Natural killer cell (primary cell): ENCODE measurements at regions of chr14 and their contacts with region 1.

Region 1: DNA sequence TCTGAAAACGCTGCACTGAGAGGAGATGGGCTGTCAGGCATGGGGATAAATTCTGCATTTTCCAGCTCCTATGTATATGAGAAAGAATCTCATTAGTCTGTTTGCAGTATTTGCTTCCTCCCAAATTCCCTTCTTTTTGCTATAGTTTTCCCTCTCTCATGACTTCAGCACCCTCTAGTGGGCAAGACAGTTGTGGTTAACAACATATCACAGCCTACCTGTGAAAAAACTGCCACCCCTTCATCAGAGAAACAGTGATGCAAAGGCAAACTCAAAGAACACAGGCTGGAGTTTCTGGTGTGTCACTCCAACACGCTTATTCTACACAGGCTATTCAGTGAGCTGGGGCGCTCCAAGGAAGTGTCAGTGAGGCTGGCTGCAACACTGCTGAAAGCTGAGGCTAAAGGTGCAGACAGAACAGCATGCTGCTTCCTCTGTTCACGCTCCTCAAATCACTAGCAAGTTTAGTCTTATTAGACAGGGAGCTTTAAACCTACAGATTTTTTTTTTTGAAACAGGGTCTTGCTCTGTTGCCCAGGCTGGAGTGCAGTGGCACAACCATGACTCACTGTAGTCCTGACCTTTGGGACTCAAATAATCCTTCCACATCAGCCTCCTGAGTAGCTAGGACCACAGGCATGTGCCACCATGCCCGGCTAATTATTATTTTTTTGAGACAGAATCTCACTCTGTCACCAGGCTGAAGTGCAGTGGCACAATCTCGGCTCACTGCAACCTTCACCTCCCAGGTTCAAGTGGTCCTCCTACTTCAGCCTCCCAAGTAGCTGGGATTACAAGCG is 19.3 kb downstream of the ZC2HC1C start:
- DNase-seq: peak in 1 of 2 donors; percentile 75
- ATAC-seq: peak; percentile 55 to 77 (median 76)
- H3K4me3 ChIP-seq: no peak overlapping the region
- H3K4me3 Mint-ChIP-seq: no peak overlapping the region
- H3K27ac ChIP-seq: no peak overlapping the region
- H3K27ac Mint-ChIP-seq: no peak overlapping the region
- H3K4me1 ChIP-seq: no peaks in the 10 kb centered on the region
- H3K4me1 Mint-ChIP-seq: no peaks in the 10 kb centered on the region
- H3K27me3 ChIP-seq: no peaks in the 10 kb centered on the region
- H3K27me3 Mint-ChIP-seq: no peaks in the 10 kb centered on the region
- CTCF ChIP-seq: peak; percentile 70

Region 2: GRCh38 chr14:74860906-74861733 is 227.7 kb before region 1 on chr14:
- intact Hi-C with region 1: loop called (anchors 1 kb)
- DNase-seq: peak; percentile 92
- ATAC-seq: peak; percentile 81 to 94 (median 88)
- H3K4me3 ChIP-seq: no peak overlapping the region
- H3K4me3 Mint-ChIP-seq: no peak overlapping the region
- H3K27ac ChIP-seq: no peak overlapping the region
- H3K27ac Mint-ChIP-seq: no peak overlapping the region
- H3K4me1 ChIP-seq: peaks cover 5% of the 10 kb centered on the region
- H3K4me1 Mint-ChIP-seq: peaks cover 3 to 9% of the 10 kb centered on the region in 2 donors
- H3K27me3 ChIP-seq: no peaks in the 10 kb centered on the region
- H3K27me3 Mint-ChIP-seq: no peaks in the 10 kb centered on the region
- CTCF ChIP-seq: peak; percentile 84

Region 3: GRCh38 chr14:74913986-74914573 is 174.7 kb before region 1 on chr14:
- intact Hi-C with region 1: loop called (anchors 1 kb)
- DNase-seq: peak in 1 of 2 donors; percentile 37
- ATAC-seq: no peak
- H3K4me3 ChIP-seq: no peak overlapping the region
- H3K4me3 Mint-ChIP-seq: no peak overlapping the region
- H3K27ac ChIP-seq: no peak overlapping the region
- H3K27ac Mint-ChIP-seq: no peak overlapping the region
- H3K4me1 ChIP-seq: no peaks in the 10 kb centered on the region
- H3K4me1 Mint-ChIP-seq: no peaks in the 10 kb centered on the region
- H3K27me3 ChIP-seq: no peaks in the 10 kb centered on the region
- H3K27me3 Mint-ChIP-seq: no peaks in the 10 kb centered on the region
- CTCF ChIP-seq: no peak

Region 4: GRCh38 chr14:74945823-74946682 is 142.7 kb before region 1 on chr14:
- intact Hi-C with region 1: loop called (anchors 1 kb)
- DNase-seq: peak; percentile 68 to 87
- ATAC-seq: peak; percentile 78 to 88 (median 83)
- H3K4me3 ChIP-seq: no peak overlapping the region
- H3K4me3 Mint-ChIP-seq: peak overlapping the region; percentile 64
- H3K27ac ChIP-seq: no peak overlapping the region
- H3K27ac Mint-ChIP-seq: peak overlapping the region; percentile 32 to 84
- H3K4me1 ChIP-seq: peaks cover 30% of the 10 kb centered on the region
- H3K4me1 Mint-ChIP-seq: peaks cover 33 to 35% of the 10 kb centered on the region in 2 donors
- H3K27me3 ChIP-seq: no peaks in the 10 kb centered on the region
- H3K27me3 Mint-ChIP-seq: no peaks in the 10 kb centered on the region
- CTCF ChIP-seq: peak; percentile 94

Region 5: DNA sequence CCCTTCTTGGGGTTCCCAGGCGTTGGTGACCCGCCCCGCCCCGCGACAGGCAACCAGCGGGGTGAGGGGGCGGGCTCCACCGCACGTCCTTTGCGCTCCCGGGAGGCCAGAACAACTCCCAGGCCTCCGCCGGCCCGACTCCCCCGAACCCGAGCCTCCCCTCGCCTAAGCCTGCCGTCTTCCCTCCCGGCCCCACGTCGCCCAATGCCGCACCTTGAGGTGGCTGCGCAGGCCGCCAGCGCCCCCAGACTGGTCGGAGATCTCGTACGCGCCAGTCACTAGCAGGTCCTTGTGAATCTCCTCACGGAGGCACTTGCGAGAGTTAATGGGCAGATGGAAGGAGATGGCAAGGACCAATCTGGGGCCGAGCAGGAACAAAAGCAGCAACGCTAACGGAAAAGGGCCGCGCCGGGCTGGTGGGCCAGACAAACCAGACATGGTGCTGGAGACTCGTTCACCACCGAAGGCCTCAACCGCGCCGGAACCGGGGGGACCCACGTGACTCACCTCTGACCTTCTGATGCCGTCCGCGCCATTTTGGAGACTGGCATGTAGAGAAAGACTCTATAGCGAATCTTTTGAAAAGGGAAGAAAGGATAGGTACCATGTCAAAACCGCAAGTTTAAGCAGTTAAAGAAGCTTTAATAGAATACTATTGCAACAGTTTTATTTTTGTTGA is 87.5 kb after region 1 on chr14 and contains the start of gene TMED10:
- intact Hi-C with region 1: no loop called
- DNase-seq: peak; percentile 90 to 95
- ATAC-seq: peak; percentile 72 to 89 (median 78)
- H3K4me3 ChIP-seq: peak within 1 kb of the TSS; percentile 73
- H3K4me3 Mint-ChIP-seq: peak within 1 kb of the TSS; percentile 93
- H3K27ac ChIP-seq: peak within 1 kb of the TSS; percentile 94
- H3K27ac Mint-ChIP-seq: peak within 1 kb of the TSS; percentile 99 to 100
- H3K4me1 ChIP-seq: peaks cover 16% of the 10 kb centered on the region
- H3K4me1 Mint-ChIP-seq: peaks cover 43 to 46% of the 10 kb centered on the region in 2 donors
- H3K27me3 ChIP-seq: no peaks in the 10 kb centered on the region
- H3K27me3 Mint-ChIP-seq: no peaks in the 10 kb centered on the region
- CTCF ChIP-seq: no peak
- total RNA-seq, gene TMED10: 216 to 244 (median 231) TPM